IMR-90 (cell line): ENCODE measurements at regions of chr11 and their contacts with region 1.

Region 1: DNA sequence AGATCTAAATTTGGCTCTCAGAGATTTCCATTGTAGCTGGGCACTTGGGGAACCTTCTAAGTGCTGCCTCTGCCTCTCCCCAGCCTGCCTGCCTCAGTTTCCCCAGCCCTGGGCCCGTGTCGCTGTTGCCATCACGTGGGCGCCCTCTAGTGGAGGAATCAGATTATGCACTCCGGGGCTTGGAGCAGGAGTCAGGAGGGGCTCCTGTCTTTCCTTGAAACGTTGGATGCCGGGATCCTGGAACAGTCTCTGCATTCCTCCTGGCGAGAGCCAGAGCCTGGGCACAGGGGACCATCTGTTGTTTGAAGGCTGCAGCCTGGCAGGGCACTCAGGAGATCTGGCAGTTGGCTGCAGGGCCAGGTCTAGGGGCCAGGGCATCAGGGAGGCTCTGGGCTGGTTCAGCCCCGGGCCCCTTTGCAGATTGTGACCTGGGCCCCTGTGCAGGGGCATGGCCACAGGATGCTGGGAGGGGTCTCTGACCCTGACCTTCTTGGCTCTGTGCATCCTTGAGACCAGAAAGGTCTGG is 71.6 kb downstream of the LRP5 start:
- DNase-seq: peak; percentile 40
- ATAC-seq: peak; percentile 21
- H3K4me3 ChIP-seq: no peak overlapping the region
- H3K27ac ChIP-seq: no peak overlapping the region
- H3K4me1 ChIP-seq: peaks cover 20% of the 10 kb centered on the region
- H3K27me3 ChIP-seq: no peaks in the 10 kb centered on the region
- CTCF ChIP-seq: peak; percentile 88
- POLR2A ChIP-seq: no peak
- RAD21 ChIP-seq: peak; percentile 88

Region 2: DNA sequence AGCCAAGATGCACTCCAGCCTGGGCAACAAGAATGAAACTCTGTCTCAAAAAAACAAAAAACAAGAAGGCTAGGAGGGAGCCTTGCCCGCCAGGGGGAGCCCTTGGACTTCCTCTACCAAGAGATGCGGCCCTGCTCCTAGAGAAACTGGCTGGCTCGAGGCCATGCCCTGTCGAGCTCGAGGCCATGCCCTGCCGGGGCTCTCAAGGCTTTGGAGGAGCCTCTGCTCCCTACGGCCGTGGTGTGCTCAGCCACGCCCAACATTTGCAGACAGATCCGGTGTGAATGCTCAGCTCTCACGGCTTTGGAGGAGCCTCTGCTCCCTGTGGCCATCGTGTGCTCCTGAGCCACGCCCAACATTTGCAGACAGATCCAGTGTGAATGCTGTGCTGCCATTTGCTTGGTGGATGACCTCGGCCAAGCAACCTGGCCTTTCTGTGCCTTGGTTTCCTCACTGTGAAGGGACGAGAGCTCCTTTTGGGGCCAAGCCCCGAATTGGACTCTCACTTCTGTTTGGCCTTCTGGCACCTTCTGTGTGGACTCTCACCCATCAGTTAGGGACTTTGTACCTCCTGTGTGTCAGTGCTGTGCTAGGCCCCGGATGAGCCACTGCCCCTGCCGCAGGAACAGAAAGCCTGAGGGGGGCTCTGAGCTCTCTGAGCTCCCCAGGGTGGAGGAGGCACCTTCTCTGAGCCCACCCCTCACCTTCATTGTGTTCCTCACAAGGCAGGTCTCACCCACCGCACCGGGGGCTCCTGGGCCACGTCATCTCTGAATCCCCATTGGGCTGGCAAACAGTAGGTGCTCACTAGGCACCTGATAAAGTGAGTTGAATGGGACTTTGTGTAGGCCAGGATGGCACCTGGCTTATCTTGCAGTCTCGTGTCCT is 126.3 kb before region 1 on chr11:
- CTCF ChIA-PET with region 1: interaction called, 4 read pairs
- POLR2A ChIA-PET with region 1: no interaction called
- dilution Hi-C with region 1: no loop called
- in situ Hi-C with region 1: no loop called
- intact Hi-C with region 1: loop called (anchors 1 kb)
- DNase-seq: peak; percentile 83
- ATAC-seq: peak; percentile 74
- H3K4me3 ChIP-seq: no peak overlapping the region
- H3K27ac ChIP-seq: no peak overlapping the region
- H3K4me1 ChIP-seq: peaks cover 11% of the 10 kb centered on the region
- H3K27me3 ChIP-seq: no peaks in the 10 kb centered on the region
- CTCF ChIP-seq: peak; percentile 85
- POLR2A ChIP-seq: no peak
- RAD21 ChIP-seq: peak; percentile 82

Region 3: DNA sequence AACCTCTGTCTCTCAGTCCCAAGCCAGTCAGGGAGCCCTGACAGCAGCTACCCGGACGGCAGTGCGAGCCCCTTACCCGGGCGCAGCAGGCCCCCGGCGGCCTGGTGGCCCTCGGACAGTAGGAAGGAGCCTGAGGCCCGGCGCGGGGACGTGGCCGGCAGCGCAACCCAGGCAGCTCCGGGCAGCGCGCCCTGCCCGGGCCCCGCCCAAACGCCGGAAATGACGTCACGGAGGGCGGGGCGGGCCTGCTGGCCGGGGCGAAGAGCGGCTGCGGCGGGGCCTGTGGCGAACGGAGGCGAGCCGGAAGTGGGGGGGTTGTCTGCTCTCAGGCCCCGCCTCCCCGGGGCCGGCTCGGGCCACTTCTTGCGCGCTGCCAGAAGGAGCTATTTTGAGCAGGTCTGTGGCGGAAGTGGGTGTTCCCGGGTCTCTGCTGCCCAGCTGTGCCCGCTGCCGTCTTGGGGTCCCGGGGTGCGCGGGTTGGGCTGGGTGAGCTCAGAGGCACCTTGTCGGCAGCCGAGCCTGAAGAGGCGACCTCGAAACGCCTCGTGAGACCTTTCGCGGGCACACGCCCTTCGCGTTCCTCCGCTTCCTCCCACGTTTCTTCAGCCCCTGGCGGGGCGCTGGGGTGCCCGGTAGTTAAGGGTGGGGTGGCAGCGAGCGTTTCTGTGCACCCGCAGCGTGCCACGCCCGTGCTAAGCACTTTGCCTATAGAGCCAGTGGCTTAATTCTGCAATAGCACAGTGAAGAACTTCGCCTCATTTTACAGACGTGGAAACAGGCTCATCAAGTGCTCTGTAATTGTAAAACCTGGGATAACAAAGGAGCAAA is 112.0 kb before region 1 on chr11 and contains the start of gene C11orf24:
- CTCF ChIA-PET with region 1: interaction called, 3 read pairs
- POLR2A ChIA-PET with region 1: interaction called, 3 read pairs
- dilution Hi-C with region 1: no loop called
- in situ Hi-C with region 1: loop called (anchors 5 kb)
- intact Hi-C with region 1: loop called (anchors 1 kb)
- DNase-seq: peak; percentile 91
- ATAC-seq: peak; percentile 91
- H3K4me3 ChIP-seq: peak within 1 kb of the TSS; percentile 94
- H3K27ac ChIP-seq: peak within 1 kb of the TSS; percentile 97
- H3K4me1 ChIP-seq: peaks cover 10% of the 10 kb centered on the region
- H3K27me3 ChIP-seq: no peaks in the 10 kb centered on the region
- CTCF ChIP-seq: no peak
- POLR2A ChIP-seq: peak; percentile 96
- RAD21 ChIP-seq: no peak
- total RNA-seq, gene C11orf24: 41.1 and 42.5 TPM in 2 replicates

Region 4: GRCh38 chr11:68312117-68312779 is 71.8 kb before region 1 on chr11 and contains the start of gene LRP5:
- CTCF ChIA-PET with region 1: interaction called, 3 read pairs
- POLR2A ChIA-PET with region 1: no interaction called
- dilution Hi-C with region 1: no loop called
- in situ Hi-C with region 1: loop called (anchors 5 kb)
- intact Hi-C with region 1: loop called (anchors 2 kb)
- DNase-seq: peak; percentile 10
- ATAC-seq: peak; percentile 60
- H3K4me3 ChIP-seq: peak within 1 kb of the TSS; percentile 64
- H3K27ac ChIP-seq: peak within 1 kb of the TSS; percentile 19
- H3K4me1 ChIP-seq: peaks cover 13% of the 10 kb centered on the region
- H3K27me3 ChIP-seq: no peaks in the 10 kb centered on the region
- CTCF ChIP-seq: no peak
- POLR2A ChIP-seq: no peak
- RAD21 ChIP-seq: no peak
- total RNA-seq, gene LRP5: 10.4 and 11.1 TPM in 2 replicates